A549 (cell line): ENCODE measurements at regions of chr15 and their contacts with region 1.

Region 1: GRCh38 chr15:92868992-92869988 is 30.8 kb upstream of the CHD2 start:
- DNase-seq: peak in 1 of 2 experiments; percentile 84
- ATAC-seq: peak; percentile 82 to 84
- H3K4me3 ChIP-seq: peak overlapping the region; percentile 13; the same call in 1 of the 3 replicates
- H3K27ac ChIP-seq: peak overlapping the region; percentile 84 to 90
- H3K4me1 ChIP-seq: peaks cover 40% of the 10 kb centered on the region
- CTCF ChIP-seq: no peak
- EP300 ChIP-seq: peak in 1 of 2 experiments; percentile 66; a peak in 1 of 5 replicates
- POLR2A ChIP-seq: no peak
- RAD21 ChIP-seq: 0 out of 5 replicates have a peak, but pooled peaks of 1 of the 2 experiments have one; percentile 21

Region 2: DNA sequence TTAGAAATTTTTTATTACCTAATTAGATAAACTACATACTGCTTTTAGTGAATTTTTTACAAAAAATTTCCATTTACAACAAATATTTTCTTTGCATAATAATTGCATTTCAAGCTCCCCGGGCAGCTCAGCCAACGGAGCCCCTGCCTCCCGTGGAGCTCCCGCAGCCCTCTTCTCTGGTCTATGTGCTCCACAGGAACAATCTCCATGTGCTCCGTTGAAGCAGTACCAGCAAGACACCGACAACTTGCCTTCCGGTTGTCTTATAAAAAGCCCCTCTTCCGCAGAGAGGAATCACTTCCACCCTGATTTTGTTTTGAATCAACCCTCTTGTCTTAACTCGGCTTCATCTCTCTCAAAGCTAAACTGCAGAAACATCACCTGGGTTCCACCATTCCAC is 16.1 kb before region 1 on chr15:
- CTCF ChIA-PET with region 1: interaction called, 6 read pairs
- POLR2A ChIA-PET with region 1: interaction called, 10 read pairs
- DNase-seq: no peak
- ATAC-seq: no peak
- H3K4me3 ChIP-seq: no peak overlapping the region
- H3K27ac ChIP-seq: no peak overlapping the region
- H3K4me1 ChIP-seq: peaks cover 13% of the 10 kb centered on the region
- CTCF ChIP-seq: no peak
- EP300 ChIP-seq: no peak
- POLR2A ChIP-seq: no peak
- RAD21 ChIP-seq: no peak

Region 3: DNA sequence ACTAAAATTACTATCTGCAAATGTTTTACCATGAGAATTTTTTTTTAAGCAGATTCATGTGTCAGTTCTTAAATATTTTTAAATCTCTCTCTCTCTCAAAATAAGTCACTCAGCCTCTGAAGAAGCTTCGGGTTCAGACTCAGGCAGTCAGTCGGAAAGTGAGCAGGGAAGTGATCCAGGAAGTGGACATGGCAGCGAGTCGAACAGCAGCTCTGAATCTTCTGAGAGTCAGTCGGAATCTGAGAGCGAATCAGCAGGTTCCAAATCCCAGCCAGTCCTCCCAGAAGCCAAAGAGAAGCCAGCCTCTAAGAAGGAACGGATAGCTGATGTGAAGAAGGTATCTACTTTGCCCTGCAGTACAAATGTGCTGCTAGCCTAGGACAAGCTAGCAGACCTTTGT is 54.9 kb after region 1 on chr15:
- CTCF ChIA-PET with region 1: no interaction called
- POLR2A ChIA-PET with region 1: no interaction called
- DNase-seq: no peak
- ATAC-seq: no peak
- H3K4me3 ChIP-seq: no peak overlapping the region
- H3K27ac ChIP-seq: no peak overlapping the region
- H3K4me1 ChIP-seq: peaks cover 41% of the 10 kb centered on the region
- CTCF ChIP-seq: no peak
- EP300 ChIP-seq: no peak
- POLR2A ChIP-seq: no peak
- RAD21 ChIP-seq: no peak

Region 4: GRCh38 chr15:92979011-92979701 is 109.9 kb after region 1 on chr15:
- CTCF ChIA-PET with region 1: no interaction called
- POLR2A ChIA-PET with region 1: no interaction called
- DNase-seq: no peak
- ATAC-seq: no peak
- H3K4me3 ChIP-seq: no peak overlapping the region
- H3K27ac ChIP-seq: no peak overlapping the region
- H3K4me1 ChIP-seq: no peaks in the 10 kb centered on the region
- CTCF ChIP-seq: no peak
- EP300 ChIP-seq: no peak
- POLR2A ChIP-seq: no peak
- RAD21 ChIP-seq: no peak

Region 5: GRCh38 chr15:93035953-93036800 is 166.9 kb after region 1 on chr15:
- CTCF ChIA-PET with region 1: no interaction called
- POLR2A ChIA-PET with region 1: no interaction called
- DNase-seq: peak; percentile 61 to 87
- ATAC-seq: peak; percentile 62 to 75
- H3K4me3 ChIP-seq: no peak overlapping the region
- H3K27ac ChIP-seq: 0 out of 6 replicates have a peak overlapping the region, but pooled peaks of 1 of the 2 experiments have one; percentile 18
- H3K4me1 ChIP-seq: no peaks in the 10 kb centered on the region
- CTCF ChIP-seq: peak; percentile 69
- EP300 ChIP-seq: no peak
- POLR2A ChIP-seq: no peak
- RAD21 ChIP-seq: peak; percentile 43 to 46

Region 6: DNA sequence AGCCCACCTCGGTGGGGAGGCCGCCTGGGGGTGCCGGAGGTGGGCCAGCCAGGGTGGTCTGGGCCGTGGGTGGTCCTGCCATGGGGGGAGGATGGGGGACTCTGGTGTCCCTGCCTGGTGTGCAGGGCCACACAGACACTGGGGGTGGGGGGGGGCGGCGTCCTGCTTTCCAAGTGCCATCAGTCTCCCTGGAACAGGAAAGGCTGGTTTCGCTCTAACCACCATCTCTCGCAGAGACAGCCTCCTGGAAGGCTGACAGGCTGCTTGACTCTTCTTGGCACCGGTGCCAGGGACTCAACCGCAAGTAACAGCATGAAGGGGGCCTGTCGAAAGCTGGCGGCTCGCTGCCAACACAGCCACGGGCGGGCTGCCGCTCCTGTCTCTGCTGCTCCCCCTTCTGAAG is 179.5 kb after region 1 on chr15:
- CTCF ChIA-PET with region 1: no interaction called
- POLR2A ChIA-PET with region 1: no interaction called
- DNase-seq: no peak
- ATAC-seq: no peak
- H3K4me3 ChIP-seq: no peak overlapping the region
- H3K27ac ChIP-seq: no peak overlapping the region
- H3K4me1 ChIP-seq: no peaks in the 10 kb centered on the region
- CTCF ChIP-seq: no peak
- EP300 ChIP-seq: no peak
- POLR2A ChIP-seq: no peak
- RAD21 ChIP-seq: no peak